Transverse colon (tissue), 4 donors: ENCODE measurements at regions of chr7 and their contacts with region 1.

Region 1: DNA sequence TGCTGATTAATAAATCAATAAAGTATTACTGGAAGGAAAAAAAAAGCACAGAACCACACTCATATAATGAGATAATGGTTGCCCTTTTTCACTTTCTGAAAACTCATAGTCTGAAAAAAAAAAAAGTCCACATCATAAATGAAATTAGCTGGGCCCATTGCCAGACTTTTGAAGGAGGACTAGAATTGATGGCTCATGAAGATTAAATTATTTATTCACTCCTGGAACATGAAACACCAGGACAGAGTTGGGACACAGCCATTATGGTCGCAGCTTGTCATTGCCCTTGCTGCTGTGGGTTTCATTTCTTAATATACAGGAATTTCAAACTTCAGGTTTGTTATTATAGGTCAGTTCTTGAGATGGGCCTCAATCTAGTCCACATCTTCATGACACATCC is 91.9 kb downstream of the CNTNAP2 start:
- DNase-seq: no peak
- H3K4me3 ChIP-seq: no peak overlapping the region
- H3K27ac ChIP-seq: no peak overlapping the region
- H3K4me1 ChIP-seq: no peaks in the 10 kb centered on the region
- H3K27me3 ChIP-seq: no peaks in the 10 kb centered on the region
- CTCF ChIP-seq: no peak
- EP300 ChIP-seq: no peak
- POLR2A ChIP-seq: no peak

Region 2: GRCh38 chr7:145774777-145775176 is 433.7 kb before region 1 on chr7:
- in situ Hi-C with region 1: no loop called
- intact Hi-C with region 1: loop called (anchors 10 kb)
- DNase-seq: no peak
- H3K4me3 ChIP-seq: no peak overlapping the region
- H3K27ac ChIP-seq: no peak overlapping the region
- H3K4me1 ChIP-seq: no peaks in the 10 kb centered on the region
- H3K27me3 ChIP-seq: no peaks in the 10 kb centered on the region
- CTCF ChIP-seq: no peak
- EP300 ChIP-seq: no peak
- POLR2A ChIP-seq: no peak